ENCODE measurements at regions of chr17 and their contacts with region 1.

Region 1: GRCh38 chr17:57671667-57672632 is 73.1 kb downstream of the CCDC182 start:
- DNase-seq: peak; percentile 91

Region 2: GRCh38 chr17:57243171-57243948 is 428.6 kb before region 1 on chr17:
- intact Hi-C with region 1: loop called (anchors 10 kb)
- DNase-seq: peak; percentile 90

Region 3: DNA sequence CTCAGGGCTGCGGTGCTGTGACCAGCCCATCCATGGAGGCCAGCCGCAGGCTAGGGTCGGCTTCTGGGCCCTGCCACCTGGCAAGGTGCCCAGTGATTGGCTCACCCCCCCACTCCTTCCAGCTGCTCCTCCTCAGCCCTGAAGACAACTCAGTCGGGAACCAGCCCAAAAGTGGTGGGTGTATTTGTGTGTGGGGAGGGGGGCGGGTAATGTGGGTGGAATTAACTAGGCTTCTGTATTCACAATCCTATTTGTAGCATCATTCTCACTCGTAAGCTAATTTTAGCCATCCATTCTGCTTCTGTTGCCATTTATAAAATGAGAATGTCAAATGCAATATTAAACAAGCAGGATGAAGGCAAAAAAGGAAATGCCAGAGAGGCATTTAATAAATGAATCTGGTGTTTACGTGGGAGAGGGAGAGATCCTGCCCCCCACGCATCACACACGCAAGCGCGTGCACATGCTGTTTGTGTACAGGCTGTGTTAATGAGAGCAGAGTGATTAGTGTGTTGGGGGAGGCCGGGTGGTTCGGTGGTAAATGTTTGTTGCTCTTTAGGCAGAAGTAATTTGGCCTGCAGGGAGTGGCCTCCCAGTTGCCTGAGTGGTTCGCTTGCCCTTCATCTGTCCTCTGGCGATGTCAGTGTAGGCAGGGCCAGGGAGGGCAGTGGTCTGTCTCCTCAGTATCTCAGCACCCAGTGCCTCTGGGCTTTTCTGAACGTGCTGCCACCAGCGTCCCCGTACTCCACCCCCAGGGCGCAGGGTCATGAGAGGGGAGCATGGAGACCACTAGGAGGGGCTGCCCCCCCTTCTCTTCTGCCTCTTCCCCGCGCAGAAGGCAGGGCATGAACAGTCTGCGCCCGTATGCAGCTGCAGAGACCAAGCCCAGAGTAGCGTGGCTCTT is 66.9 kb before region 1 on chr17:
- intact Hi-C with region 1: loop called in 1 of 2 experiments (anchors 5 kb)
- DNase-seq: peak; percentile 73

Region 4: GRCh38 chr17:57916925-57917858 is 245.2 kb after region 1 on chr17:
- intact Hi-C with region 1: no loop called
- DNase-seq: no peak